MCF 10A (cell line): ENCODE measurements at regions of chr2 and their contacts with region 1.

Region 1: DNA sequence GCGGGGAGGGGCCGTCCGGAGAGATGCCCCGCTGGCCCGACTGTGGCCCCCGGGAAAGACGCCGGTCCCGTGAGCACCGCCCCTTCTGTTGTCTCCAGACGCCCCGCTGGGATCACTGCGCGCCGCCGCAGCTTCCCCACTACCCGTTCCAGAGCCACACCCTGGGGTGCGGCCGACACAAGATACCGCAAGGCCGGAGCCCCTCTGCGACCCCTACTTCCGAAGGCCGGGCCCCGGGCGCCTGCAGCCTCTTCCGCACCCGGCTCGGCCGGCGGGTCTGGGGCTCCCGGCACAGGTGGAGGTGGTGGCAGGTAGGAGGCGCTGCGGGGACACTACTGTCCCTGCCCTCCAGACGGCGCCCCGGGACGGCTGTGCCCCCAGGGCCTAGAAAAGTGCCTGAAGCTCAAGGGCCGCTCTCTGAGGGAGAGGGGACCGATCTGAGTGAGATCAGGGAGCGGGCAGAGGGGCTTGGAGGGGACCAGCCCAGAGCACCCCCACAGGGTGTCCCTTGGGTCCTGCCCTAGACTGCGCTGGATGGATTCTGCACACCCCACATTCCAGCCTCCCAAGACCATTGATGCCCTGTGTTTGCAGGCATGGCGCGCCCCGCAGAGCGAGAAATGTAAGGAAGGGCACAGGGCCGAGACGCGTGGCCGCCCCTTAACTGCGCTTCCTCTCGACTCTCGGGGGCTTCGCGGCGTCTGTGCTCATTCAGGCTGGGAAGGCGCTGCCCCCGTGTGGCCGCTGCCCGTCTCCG is 80.0 kb downstream of the GFPT1 start:
- DNase-seq: peak; percentile 76
- H3K4me3 Mint-ChIP-seq: peak overlapping the region; percentile 73
- H3K27ac Mint-ChIP-seq: no peak overlapping the region
- H3K4me1 Mint-ChIP-seq: peaks cover 17% of the 10 kb centered on the region
- H3K27me3 Mint-ChIP-seq: no peaks in the 10 kb centered on the region
- CTCF ChIP-seq: peak; percentile 78

Region 2: GRCh38 chr2:68936427-68936826 is 370.6 kb before region 1 on chr2:
- CTCF ChIA-PET with region 1: interaction called, 11 read pairs
- POLR2A ChIA-PET with region 1: no interaction called
- intact Hi-C with region 1: no loop called
- DNase-seq: peak; percentile 57
- H3K4me3 Mint-ChIP-seq: no peak overlapping the region
- H3K27ac Mint-ChIP-seq: peak overlapping the region; percentile 24
- H3K4me1 Mint-ChIP-seq: peaks cover 20% of the 10 kb centered on the region
- H3K27me3 Mint-ChIP-seq: no peaks in the 10 kb centered on the region
- CTCF ChIP-seq: no peak

Region 3: GRCh38 chr2:69012310-69013141 is 294.5 kb before region 1 on chr2:
- CTCF ChIA-PET with region 1: interaction called, 30 read pairs
- POLR2A ChIA-PET with region 1: interaction called, 3 read pairs
- intact Hi-C with region 1: loop called (anchors 1 kb)
- DNase-seq: peak; percentile 64
- H3K4me3 Mint-ChIP-seq: peak overlapping the region; percentile 99
- H3K27ac Mint-ChIP-seq: peak overlapping the region; percentile 31
- H3K4me1 Mint-ChIP-seq: peaks cover 12% of the 10 kb centered on the region
- H3K27me3 Mint-ChIP-seq: no peaks in the 10 kb centered on the region
- CTCF ChIP-seq: peak; percentile 81

Region 4: DNA sequence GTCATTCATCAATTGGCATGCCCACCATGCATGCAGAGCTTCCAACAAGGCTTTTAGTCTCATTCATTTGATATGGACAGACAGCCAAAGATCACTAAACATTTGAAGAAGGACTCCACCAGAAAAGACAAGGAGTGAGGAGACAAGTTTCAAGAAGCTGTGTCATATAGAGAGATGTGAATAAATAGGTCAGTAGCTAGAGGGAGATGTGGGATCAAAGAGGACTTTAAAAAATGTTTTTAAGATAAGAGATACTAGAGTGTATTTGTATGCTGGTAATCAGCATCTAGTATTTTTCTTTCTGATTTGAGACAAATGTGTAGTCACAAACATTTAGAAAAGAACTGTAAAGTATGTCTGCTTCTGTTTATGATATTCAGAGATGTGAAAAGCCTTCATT is 245.5 kb before region 1 on chr2:
- CTCF ChIA-PET with region 1: interaction called, 12 read pairs
- POLR2A ChIA-PET with region 1: no interaction called
- intact Hi-C with region 1: no loop called
- DNase-seq: no peak
- H3K4me3 Mint-ChIP-seq: no peak overlapping the region
- H3K27ac Mint-ChIP-seq: peak overlapping the region; percentile 7
- H3K4me1 Mint-ChIP-seq: peaks cover 16% of the 10 kb centered on the region
- H3K27me3 Mint-ChIP-seq: no peaks in the 10 kb centered on the region
- CTCF ChIP-seq: no peak

Region 5: DNA sequence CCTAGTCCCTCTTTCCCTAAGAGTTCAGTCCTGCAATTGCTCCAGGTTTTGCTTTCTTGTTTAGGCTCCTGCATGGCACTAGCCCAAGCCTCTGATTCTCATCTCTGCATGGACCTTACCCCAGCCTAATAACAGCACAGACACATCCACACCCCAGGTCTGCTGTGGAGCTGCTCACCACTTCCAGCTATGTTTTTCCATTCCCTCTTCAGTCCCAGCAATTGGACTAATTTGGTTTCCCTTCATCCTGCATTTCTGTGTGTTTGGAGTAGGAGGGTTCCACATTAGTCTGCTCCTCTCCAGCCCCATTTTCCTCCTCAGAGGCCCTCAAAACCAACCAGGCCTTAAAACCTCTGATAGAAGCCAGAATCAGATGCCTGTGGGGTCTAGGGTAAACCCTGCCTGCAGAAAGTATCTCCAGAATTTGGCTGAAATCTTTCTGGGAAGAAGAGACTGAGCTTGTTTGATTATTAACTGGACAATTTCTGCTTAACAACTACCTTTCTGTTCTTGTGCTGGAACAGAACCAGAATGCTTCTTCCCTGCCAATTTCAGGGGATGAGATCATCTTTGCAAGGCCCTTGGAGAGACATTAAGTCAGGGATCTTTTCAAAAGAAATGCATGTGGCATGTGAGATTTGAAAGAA is 15.9 kb before region 1 on chr2:
- CTCF ChIA-PET with region 1: interaction called, 10 read pairs
- POLR2A ChIA-PET with region 1: no interaction called
- intact Hi-C with region 1: no loop called
- DNase-seq: no peak
- H3K4me3 Mint-ChIP-seq: no peak overlapping the region
- H3K27ac Mint-ChIP-seq: no peak overlapping the region
- H3K4me1 Mint-ChIP-seq: peaks cover 9% of the 10 kb centered on the region
- H3K27me3 Mint-ChIP-seq: no peaks in the 10 kb centered on the region
- CTCF ChIP-seq: no peak

Region 6: DNA sequence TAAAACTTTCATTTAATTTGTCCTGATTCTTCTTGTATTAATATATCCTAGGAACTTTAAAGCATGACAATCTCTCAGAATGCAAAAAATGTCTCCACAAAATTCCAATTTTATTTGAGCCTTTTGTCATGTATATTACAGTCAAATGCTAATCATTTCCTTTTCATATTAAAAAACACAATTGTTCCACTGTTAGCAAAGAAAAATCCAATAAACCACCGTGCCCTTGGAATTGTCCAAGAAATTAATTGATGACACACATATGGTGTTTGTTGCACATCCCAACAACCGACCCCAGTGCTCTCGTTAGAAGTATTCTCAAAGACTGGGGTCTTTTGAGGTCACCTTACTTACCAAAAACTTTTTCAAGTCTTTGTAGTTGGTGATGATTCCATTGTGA is 51.9 kb after region 1 on chr2:
- CTCF ChIA-PET with region 1: no interaction called
- POLR2A ChIA-PET with region 1: no interaction called
- intact Hi-C with region 1: no loop called
- DNase-seq: no peak
- H3K4me3 Mint-ChIP-seq: no peak overlapping the region
- H3K27ac Mint-ChIP-seq: no peak overlapping the region
- H3K4me1 Mint-ChIP-seq: peaks cover 9% of the 10 kb centered on the region
- H3K27me3 Mint-ChIP-seq: no peaks in the 10 kb centered on the region
- CTCF ChIP-seq: no peak